ENCODE measurements at regions of chr1 and their contacts with region 1.

Region 1: GRCh38 chr1:147156638-147157037 is 15.6 kb downstream of the PRKAB2 start:
- DNase-seq: no peak
- H3K4me3 ChIP-seq: no peak overlapping the region
- H3K27ac ChIP-seq: no peak overlapping the region
- H3K4me1 ChIP-seq: no peaks in the 10 kb centered on the region; the same call in 1 of the 2 replicates
- H3K27me3 ChIP-seq: no peaks in the 10 kb centered on the region
- CTCF ChIP-seq: no peak

Region 2: DNA sequence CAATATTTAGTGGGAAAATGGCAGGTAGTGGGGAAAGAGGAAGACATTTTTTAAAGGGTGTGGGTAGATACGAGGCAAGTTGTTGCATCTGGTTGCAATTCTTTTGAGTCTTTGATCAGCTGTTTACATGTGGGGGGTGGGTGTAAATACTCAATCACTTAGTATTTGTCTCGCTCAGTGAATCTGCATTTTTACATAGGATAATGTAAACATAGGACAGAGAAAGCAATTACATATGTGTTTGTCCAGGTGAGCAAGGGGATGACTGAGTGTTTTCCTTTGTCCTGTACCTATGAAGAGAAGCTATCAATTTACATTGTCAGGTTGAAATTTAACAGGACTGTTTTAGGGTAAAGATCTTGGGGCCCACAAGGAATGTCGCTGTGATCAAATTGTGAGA is 63.2 kb before region 1 on chr1:
- CTCF ChIA-PET with region 1: no interaction called
- POLR2A ChIA-PET with region 1: no interaction called
- intact Hi-C with region 1: loop called (anchors 10 kb)
- DNase-seq: no peak
- H3K4me3 ChIP-seq: no peak overlapping the region
- H3K27ac ChIP-seq: no peak overlapping the region
- H3K4me1 ChIP-seq: 0 out of 2 replicates have a peak, but pooled peaks cover 7% of the 10 kb centered on the region
- H3K27me3 ChIP-seq: no peaks in the 10 kb centered on the region
- CTCF ChIP-seq: no peak

Region 3: DNA sequence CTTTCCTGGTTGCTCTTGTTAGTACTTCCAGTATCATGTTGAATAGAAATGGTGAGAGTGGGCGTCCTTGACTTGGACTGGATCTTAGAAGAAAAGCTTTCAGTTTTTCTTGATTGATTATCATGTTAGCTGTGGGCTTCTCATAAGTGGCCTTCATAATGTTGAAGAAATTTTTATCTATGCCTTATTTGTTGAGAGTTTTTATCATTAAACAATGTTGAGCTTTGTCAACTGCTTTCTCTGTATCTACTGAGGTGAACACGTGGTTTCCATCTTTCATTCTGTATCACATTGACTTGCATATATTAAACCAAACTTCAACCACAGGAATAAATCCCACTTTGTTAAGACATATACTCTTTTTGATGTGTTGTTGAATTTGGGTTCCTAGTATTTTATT is 13.8 kb before region 1 on chr1:
- CTCF ChIA-PET with region 1: no interaction called
- POLR2A ChIA-PET with region 1: no interaction called
- intact Hi-C with region 1: no loop called
- DNase-seq: no peak
- H3K4me3 ChIP-seq: no peak overlapping the region
- H3K27ac ChIP-seq: no peak overlapping the region
- H3K4me1 ChIP-seq: no peaks in the 10 kb centered on the region
- H3K27me3 ChIP-seq: no peaks in the 10 kb centered on the region
- CTCF ChIP-seq: no peak

Region 4: GRCh38 chr1:147204080-147204479 is 47.4 kb after region 1 on chr1:
- CTCF ChIA-PET with region 1: no interaction called
- POLR2A ChIA-PET with region 1: no interaction called
- intact Hi-C with region 1: no loop called
- DNase-seq: no peak
- H3K4me3 ChIP-seq: no peak overlapping the region
- H3K27ac ChIP-seq: no peak overlapping the region
- H3K4me1 ChIP-seq: no peaks in the 10 kb centered on the region
- H3K27me3 ChIP-seq: no peaks in the 10 kb centered on the region
- CTCF ChIP-seq: no peak